ENCODE measurements at regions of chr6 and their contacts with region 1.

Region 1: GRCh38 chr6:30616811-30617564 is at the start of gene PPP1R10:
- DNase-seq: peak; percentile 99
- H3K4me3 Mint-ChIP-seq: peak within 1 kb of the TSS; percentile 91
- H3K27ac Mint-ChIP-seq: peak within 1 kb of the TSS; percentile 98
- H3K4me1 Mint-ChIP-seq: peaks cover 43% of the 10 kb centered on the region
- H3K27me3 Mint-ChIP-seq: peaks cover 6% of the 10 kb centered on the region
- total RNA-seq, gene PPP1R10: 124 and 126 TPM in 2 replicates

Region 2: DNA sequence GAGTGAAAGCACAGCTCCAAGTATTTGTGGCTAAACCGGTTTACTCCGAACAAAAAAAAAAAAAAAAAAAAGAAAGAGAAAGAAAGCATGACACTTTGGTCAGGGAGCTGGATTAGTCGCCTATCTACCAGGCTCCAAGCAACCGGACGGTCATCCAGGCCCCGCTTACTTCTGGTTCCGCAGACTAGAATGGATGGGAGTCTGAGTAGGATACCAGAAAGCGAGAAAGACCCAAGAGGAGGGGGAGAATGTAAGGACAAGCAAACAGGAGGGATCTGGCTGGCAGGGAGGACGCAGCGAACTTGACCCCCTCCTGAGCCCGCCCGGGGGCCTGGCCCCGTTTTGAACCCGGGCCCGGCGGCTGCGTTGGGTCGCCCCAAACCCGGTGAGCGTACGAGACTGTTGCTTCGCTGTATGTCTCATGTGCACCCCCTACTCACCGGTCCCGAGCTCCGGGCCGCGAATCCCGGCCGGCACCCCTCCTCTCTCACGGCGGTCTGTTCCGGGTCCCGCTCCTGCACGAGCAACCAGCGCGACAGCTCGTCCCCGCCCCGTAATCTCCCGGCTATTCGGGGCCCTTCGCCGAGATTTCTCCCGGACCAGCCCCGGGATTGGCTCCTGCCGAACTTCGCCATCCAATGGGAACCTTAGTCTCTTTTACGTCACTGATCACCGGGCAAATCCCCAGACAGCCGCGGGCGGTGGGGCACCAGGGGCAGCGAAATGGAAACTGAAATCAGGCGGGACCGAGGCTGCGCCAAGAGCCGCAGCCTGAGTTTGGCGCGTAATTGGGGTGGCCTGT is 403.9 kb before region 1 on chr6 and contains the start of gene TRIM26:
- intact Hi-C with region 1: loop called (anchors 1 kb)
- DNase-seq: peak; percentile 98
- H3K4me3 Mint-ChIP-seq: peak within 1 kb of the TSS; percentile 88
- H3K27ac Mint-ChIP-seq: peak within 1 kb of the TSS; percentile 97
- H3K4me1 Mint-ChIP-seq: peaks cover 57% of the 10 kb centered on the region
- H3K27me3 Mint-ChIP-seq: no peaks in the 10 kb centered on the region
- total RNA-seq, gene TRIM26: 61.6 and 64.7 TPM in 2 replicates

Region 3: GRCh38 chr6:30571075-30571768 is 45.8 kb before region 1 on chr6 and contains the start of gene ABCF1:
- intact Hi-C with region 1: loop called (anchors 1 kb)
- DNase-seq: peak; percentile 100
- H3K4me3 Mint-ChIP-seq: peak within 1 kb of the TSS; percentile 98
- H3K27ac Mint-ChIP-seq: peak within 1 kb of the TSS; percentile 98
- H3K4me1 Mint-ChIP-seq: peaks cover 62% of the 10 kb centered on the region
- H3K27me3 Mint-ChIP-seq: no peaks in the 10 kb centered on the region
- total RNA-seq, gene ABCF1: 115 and 120 TPM in 2 replicates

Region 4: GRCh38 chr6:30603961-30604360 is 13.0 kb before region 1 on chr6:
- intact Hi-C with region 1: no loop called
- DNase-seq: no peak
- H3K4me3 Mint-ChIP-seq: no peak overlapping the region
- H3K27ac Mint-ChIP-seq: no peak overlapping the region
- H3K4me1 Mint-ChIP-seq: peaks cover 23% of the 10 kb centered on the region
- H3K27me3 Mint-ChIP-seq: no peaks in the 10 kb centered on the region

Region 5: DNA sequence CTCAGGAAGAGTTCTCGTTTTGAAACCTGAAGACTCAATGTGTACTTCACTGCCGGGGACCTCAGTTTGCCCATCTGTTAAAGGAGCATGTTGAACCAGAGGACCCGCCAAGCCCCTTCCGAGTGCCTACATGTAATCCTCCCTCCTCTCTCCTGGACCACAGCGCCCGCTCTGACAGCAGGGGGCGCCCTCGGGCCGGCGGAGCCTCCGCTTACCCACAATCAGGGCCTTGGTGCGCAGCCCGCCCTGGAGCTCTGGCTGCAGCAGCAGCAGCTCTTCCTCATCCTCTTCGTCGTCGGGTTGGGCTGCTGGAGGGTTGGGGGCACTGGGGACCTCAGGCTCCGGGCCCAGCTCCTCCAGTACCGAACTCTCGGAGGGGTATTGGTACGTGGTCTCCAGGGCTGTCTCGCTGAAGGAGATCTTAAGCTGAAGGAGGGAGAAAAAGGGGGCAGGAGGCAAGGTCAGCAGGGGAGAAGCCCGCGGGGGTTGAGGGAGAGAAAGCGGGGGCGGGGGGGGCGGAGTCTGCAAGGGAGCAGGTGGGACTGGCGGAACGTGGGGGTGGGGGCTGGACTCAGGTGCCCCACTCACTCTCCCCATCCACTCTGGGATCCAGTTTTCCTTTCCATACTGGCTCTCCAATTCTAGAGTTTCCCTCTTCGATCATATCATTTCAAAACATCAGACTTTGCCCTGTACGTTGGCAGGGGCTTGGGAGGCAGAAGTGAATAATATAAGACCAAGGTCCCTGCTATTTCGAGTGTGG is 62.2 kb after region 1 on chr6:
- intact Hi-C with region 1: loop called (anchors 1 kb)
- DNase-seq: peak; percentile 85
- H3K4me3 Mint-ChIP-seq: peak overlapping the region; percentile 94
- H3K27ac Mint-ChIP-seq: peak overlapping the region; percentile 90
- H3K4me1 Mint-ChIP-seq: peaks cover 26% of the 10 kb centered on the region
- H3K27me3 Mint-ChIP-seq: no peaks in the 10 kb centered on the region

Region 6: DNA sequence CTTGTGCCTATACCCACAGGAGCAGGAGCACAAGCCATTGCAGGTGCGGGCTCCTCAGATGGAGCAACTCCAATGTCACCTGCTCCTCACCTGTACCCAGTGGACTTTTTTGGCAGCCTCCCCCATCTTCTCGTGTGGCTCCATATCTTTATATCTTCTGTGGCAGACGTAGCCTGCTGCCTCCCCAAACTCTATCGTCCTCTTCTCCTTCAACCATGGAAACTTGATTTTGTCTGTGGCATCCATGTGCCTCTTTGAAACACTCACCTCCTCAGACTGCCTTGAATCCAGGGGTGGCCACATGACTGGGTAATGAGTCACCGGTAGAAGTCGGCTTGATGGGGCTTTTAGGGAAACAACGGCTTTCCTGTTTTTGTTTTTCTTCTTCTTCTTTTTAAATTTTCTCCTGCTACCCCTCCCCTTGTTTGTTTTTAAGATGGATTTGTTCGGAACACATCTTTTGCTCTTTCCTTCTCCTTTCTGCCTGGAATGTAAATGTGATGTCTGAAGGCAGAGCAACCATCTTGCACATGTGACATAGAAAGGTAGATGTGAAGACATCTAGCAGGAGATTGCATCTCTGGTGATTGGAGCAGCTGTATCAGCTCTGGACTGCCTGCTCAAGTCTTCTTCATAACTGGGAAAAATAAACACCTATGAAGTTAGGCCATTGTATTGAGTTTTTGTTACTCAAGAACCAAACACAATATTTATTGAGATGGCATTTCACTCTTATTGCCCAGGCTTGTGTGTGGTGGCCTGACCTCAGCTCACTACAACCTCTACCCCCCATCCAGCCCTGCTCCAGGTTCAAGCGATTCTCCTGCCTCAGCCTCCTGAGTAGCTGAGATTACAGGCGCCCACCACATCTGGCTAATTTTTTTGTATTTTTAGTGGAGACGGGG is 197.4 kb after region 1 on chr6:
- intact Hi-C with region 1: loop called (anchors 5 kb)
- DNase-seq: peak; percentile 47
- H3K4me3 Mint-ChIP-seq: peak overlapping the region; percentile 72
- H3K27ac Mint-ChIP-seq: peak overlapping the region; percentile 99
- H3K4me1 Mint-ChIP-seq: peaks cover 86% of the 10 kb centered on the region
- H3K27me3 Mint-ChIP-seq: peaks cover 1% of the 10 kb centered on the region

Region 7: GRCh38 chr6:31356946-31357466 is 740.0 kb after region 1 on chr6 and contains the start of gene HLA-B:
- intact Hi-C with region 1: loop called (anchors 5 kb)
- DNase-seq: peak; percentile 67
- H3K4me3 Mint-ChIP-seq: peak within 1 kb of the TSS; percentile 95
- H3K27ac Mint-ChIP-seq: peak within 1 kb of the TSS; percentile 95
- H3K4me1 Mint-ChIP-seq: peaks cover 64% of the 10 kb centered on the region
- H3K27me3 Mint-ChIP-seq: peaks cover 8% of the 10 kb centered on the region
- total RNA-seq, gene HLA-B: 3,770 and 3,814 TPM in 2 replicates